ENCODE measurements at regions of chr4 and their contacts with region 1.

Region 1: GRCh38 chr4:74531963-74532794 is 87.2 kb downstream of the AREG start:
- DNase-seq: peak; percentile 78
- H3K4me3 ChIP-seq: no peak overlapping the region
- H3K27ac ChIP-seq: peak overlapping the region; percentile 43
- H3K4me1 ChIP-seq: peaks cover 13% of the 10 kb centered on the region
- H3K27me3 ChIP-seq: no peaks in the 10 kb centered on the region
- CTCF ChIP-seq: peak; percentile 73 to 85

Region 2: DNA sequence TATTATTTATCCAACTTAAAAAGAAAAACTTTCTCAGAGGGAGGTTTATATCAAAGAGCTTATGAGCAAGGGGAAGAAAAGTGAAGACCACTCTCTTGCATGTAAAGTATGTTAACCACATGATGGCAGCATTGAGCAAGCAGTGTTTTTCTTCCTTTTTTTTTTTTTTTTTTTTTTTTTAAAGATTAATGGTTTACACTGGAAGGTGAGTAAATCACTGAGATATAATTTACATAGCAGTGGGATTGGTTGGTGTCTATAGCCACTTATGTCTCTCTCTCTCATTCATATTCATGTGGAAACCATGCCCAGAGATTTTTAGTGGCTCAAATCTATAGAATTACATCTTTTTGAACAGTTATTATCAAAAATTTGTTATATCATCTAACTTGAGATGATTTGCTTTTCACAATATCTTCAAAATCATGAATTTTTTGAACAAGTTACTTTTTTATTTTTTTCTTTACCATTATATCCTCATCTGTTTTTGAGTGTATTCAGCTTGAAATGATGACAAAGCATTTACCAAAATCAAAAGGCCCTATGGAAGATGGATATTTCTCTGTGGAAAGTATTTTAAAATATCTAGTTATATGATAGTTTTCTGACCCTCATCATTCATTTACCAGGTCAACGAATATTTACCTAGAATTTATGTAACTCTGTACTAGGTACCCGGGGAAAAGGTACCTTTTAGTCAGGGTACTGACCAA is 342.7 kb before region 1 on chr4:
- CTCF ChIA-PET with region 1: no interaction called
- dilution Hi-C with region 1: no loop called
- in situ Hi-C with region 1: no loop called
- intact Hi-C with region 1: no loop called
- DNase-seq: peak; percentile 44
- H3K4me3 ChIP-seq: no peak overlapping the region
- H3K27ac ChIP-seq: no peak overlapping the region
- H3K4me1 ChIP-seq: no peaks in the 10 kb centered on the region
- H3K27me3 ChIP-seq: no peaks in the 10 kb centered on the region
- CTCF ChIP-seq: peak; percentile 71 to 73

Region 3: DNA sequence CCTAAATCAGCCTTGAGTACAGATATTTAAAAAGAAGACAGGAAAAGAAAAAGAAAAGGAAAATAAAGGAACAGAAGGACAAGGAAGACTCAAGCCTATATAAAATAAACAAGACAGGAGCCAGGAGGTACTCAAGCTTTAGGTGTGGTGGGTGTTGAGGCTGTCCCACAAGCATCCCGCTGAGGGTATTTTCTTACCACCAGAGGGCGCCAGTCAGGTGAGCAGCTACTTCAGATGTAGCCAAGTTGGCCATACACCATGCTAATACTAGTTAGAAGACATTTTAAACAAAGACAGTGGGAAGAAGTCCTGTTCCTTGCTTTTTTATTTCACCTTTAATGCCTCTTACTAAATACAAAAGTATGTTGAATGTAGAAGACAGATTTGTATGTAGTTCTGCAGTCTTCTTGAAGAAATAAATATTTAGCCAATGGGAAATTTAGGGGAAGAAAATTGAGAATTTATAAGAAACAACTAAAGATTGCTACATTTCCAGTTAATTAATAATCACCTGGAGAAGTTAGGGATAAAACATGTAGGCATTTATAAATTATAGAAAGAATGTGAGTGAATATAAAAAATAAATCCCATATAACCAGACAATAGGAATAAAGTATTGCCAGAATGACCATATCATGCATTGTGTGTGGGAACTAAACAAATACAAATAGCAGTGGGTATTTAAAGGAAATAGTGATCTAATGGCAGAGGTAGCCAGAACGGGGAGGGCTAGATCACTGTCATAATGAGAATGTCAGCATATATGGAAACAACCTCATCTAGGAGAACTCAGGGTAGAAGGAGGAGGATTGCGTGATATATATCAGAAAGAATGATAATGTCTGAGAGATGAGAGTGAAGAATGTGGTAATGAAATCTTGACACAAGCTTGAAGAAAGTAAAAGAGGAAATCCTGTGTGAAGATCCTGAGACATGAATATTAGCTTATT is 303.2 kb before region 1 on chr4:
- CTCF ChIA-PET with region 1: no interaction called
- dilution Hi-C with region 1: no loop called
- in situ Hi-C with region 1: no loop called
- intact Hi-C with region 1: loop called (anchors 10 kb)
- DNase-seq: peak; percentile 68
- H3K4me3 ChIP-seq: no peak overlapping the region
- H3K27ac ChIP-seq: no peak overlapping the region
- H3K4me1 ChIP-seq: peaks cover 15% of the 10 kb centered on the region
- H3K27me3 ChIP-seq: no peaks in the 10 kb centered on the region
- CTCF ChIP-seq: peak; percentile 84 to 88

Region 4: DNA sequence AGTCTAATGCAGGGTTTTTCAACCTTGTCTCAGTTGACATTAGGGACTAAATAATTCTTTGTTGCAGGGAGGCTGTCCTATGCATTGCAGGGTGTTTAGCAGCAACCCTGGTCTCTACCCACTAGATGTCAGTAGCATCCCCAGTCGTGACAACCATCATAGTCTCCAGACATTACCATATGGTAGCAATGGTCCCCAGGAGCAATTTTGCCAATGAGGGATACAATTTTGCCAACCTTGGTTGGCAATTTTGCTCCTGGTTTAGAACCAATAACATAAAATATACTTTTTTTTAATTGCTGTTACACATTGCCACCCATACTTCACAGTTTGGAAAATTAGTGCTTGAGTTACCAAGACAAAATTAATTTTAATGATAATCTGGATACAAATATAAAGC is 161.3 kb before region 1 on chr4:
- CTCF ChIA-PET with region 1: no interaction called
- dilution Hi-C with region 1: loop called (anchors 25 kb)
- in situ Hi-C with region 1: loop called (anchors 10 kb)
- intact Hi-C with region 1: loop called (anchors 1 kb)
- DNase-seq: peak; percentile 58
- H3K4me3 ChIP-seq: no peak overlapping the region
- H3K27ac ChIP-seq: peak overlapping the region; percentile 57
- H3K4me1 ChIP-seq: peaks cover 37% of the 10 kb centered on the region
- H3K27me3 ChIP-seq: no peaks in the 10 kb centered on the region
- CTCF ChIP-seq: peak; percentile 90 to 96

Region 5: DNA sequence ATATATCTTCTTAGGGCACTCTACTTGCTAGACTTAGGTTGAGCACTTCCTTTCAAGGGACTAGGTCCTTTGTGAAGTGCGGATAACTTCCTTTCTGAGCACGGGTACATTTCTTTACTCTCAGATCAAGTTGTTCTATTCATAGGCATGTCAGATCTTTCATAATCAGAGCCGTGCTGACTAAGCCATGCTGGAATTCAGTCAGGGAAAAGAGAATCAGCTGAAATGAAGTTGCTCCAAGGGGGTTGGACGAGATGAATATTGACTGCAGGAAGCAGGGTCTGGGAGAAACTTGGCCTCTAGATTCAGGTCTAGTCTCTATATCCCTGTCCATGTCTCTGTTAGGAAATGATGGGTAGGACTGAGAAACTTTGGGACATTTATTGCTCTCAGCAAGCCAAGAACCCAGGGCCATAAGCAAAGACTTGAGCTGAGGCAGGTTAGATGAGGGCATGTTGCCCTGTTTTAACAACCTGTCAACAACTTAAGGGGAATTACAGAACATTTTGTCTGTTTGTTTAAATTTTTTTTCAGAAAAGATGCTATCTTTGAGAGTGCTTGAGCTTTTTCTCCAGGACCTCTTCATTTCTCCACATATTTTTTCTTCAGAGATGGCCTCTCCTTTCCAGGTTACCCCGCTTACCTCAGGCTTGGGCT is 58.9 kb before region 1 on chr4:
- CTCF ChIA-PET with region 1: no interaction called
- dilution Hi-C with region 1: no loop called
- in situ Hi-C with region 1: no loop called
- intact Hi-C with region 1: loop called (anchors 5 kb)
- DNase-seq: peak; percentile 80
- H3K4me3 ChIP-seq: no peak overlapping the region
- H3K27ac ChIP-seq: no peak overlapping the region
- H3K4me1 ChIP-seq: peaks cover 44% of the 10 kb centered on the region
- H3K27me3 ChIP-seq: no peaks in the 10 kb centered on the region
- CTCF ChIP-seq: no peak

Region 6: DNA sequence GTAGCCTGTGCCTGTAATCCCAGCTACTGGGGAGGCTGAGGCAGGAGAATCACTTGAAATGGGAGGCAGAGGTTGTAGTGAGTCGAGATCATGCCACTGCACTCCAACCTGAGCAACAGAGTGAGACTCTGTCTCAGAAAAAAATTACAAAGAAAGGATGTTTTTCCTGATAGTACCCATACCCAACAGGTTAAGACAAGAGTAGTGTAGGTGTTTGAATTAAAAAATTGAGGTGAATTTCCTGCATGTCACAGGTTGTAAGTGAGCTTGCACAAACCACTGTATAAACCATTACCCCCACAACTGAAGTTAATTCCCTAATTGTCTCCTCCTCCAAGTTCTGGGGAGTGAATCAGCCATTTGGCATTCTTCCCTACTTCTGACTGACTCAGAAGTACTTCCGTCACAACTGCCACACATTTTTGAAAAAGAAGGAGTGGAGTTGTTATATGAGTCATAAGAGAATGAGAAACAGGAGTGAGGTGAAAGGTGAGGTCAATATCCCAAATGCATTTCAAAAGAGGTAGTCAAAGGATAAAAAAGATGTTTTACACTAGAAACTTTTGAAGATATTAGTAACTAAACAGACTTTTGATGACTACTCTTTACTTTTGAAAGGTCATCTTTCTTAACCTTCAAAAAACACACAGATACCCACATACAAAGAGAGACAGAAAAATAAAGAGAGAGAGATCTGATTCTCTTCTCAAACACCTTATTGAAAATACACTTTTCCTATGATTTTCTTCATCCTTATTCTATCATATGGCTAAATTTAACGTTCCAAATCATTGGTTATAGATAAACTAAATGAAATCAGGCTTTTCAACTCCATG is 127.6 kb after region 1 on chr4:
- CTCF ChIA-PET with region 1: no interaction called
- dilution Hi-C with region 1: no loop called
- in situ Hi-C with region 1: loop called in 1 of 2 experiments (anchors 5 kb)
- intact Hi-C with region 1: no loop called
- DNase-seq: peak; percentile 100
- H3K4me3 ChIP-seq: no peak overlapping the region
- H3K27ac ChIP-seq: peak overlapping the region; percentile 88
- H3K4me1 ChIP-seq: peaks cover 36% of the 10 kb centered on the region
- H3K27me3 ChIP-seq: no peaks in the 10 kb centered on the region
- CTCF ChIP-seq: no peak